ENCODE measurements at regions of chr5 and their contacts with region 1.

Region 1: GRCh38 chr5:88660947-88661805 is 221.8 kb downstream of the MEF2C start:
- DNase-seq: peak; percentile 96 to 99 (median 98)
- H3K4me3 ChIP-seq: peak overlapping the region; percentile 45 to 93 (median 64)
- H3K27ac ChIP-seq: peak overlapping the region; percentile 43 to 100 (median 98)
- H3K27me3 ChIP-seq: peaks cover 0 to 21% (median 0%) of the 10 kb centered on the region in 45 donors
- CTCF ChIP-seq: peak in 34 of 56 donors; percentile 6 to 53 (median 26)

Region 2: DNA sequence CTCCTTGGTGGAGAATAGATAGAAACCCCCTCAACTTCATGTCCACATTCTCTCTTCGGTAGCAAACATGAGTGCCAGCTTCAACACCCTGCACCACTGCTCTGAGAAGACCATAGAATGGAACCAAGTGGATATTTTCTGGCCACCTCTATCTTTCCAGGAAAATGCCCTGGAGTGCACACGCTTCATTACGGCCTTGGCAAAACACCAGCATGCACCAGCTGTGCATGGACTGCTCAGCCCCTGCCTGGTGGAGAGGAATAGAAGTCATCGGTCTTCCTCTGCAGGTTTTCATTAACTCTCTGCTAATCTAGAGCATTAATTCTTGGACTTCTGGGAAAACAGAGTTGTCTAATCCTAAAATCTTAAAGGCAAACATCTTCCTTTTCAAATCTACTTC is 180.9 kb before region 1 on chr5:
- intact Hi-C with region 1: loop called in 1 of 2 experiments (anchors 5 kb)
- DNase-seq: peak in 5 of 10 donors; percentile 21 to 42 (median 35)
- H3K4me3 ChIP-seq: peak overlapping the region in 23 of 59 donors; percentile 0 to 49 (median 15)
- H3K27ac ChIP-seq: peak overlapping the region in 22 of 59 donors; percentile 1 to 63 (median 30)
- H3K27me3 ChIP-seq: no peaks in the 10 kb centered on the region
- CTCF ChIP-seq: no peak

Region 3: GRCh38 chr5:88674356-88675167 is 13.4 kb after region 1 on chr5:
- intact Hi-C with region 1: loop called (anchors 1 to 2 kb)
- DNase-seq: peak; percentile 78 to 90 (median 86)
- H3K4me3 ChIP-seq: peak overlapping the region; percentile 55 to 93 (median 79)
- H3K27ac ChIP-seq: peak overlapping the region; percentile 91 to 100 (median 99)
- H3K27me3 ChIP-seq: peaks cover 0 to 32% (median 0%) of the 10 kb centered on the region in 45 donors
- CTCF ChIP-seq: peak in 15 of 56 donors; percentile 3 to 38 (median 10)

Region 4: DNA sequence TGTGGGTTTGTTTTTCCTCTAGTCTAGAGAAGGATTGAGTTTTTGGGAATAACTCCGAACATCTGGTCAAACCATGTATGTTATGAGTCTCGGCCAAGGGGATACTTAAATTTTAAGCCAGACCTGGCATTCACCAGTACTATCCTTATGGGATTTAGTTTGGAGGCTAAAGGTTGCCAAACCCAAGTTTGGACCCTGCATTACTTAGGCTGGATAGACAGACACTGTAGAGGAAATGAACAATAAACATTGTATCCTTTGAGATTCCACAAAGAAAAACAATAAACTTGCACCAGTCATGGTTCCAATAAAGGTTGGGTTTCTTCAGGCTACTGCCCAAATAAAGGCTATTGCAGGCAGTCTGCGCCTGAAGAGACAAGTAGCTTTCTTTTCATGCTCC is 518.6 kb after region 1 on chr5:
- intact Hi-C with region 1: no loop called
- DNase-seq: no peak
- H3K4me3 ChIP-seq: no peak overlapping the region
- H3K27ac ChIP-seq: no peak overlapping the region
- H3K27me3 ChIP-seq: no peaks in the 10 kb centered on the region
- CTCF ChIP-seq: no peak

Measured in dorsolateral prefrontal cortex (tissue), 120 donors.